ENCODE measurements at regions of chr7 and their contacts with region 1.

Region 1: DNA sequence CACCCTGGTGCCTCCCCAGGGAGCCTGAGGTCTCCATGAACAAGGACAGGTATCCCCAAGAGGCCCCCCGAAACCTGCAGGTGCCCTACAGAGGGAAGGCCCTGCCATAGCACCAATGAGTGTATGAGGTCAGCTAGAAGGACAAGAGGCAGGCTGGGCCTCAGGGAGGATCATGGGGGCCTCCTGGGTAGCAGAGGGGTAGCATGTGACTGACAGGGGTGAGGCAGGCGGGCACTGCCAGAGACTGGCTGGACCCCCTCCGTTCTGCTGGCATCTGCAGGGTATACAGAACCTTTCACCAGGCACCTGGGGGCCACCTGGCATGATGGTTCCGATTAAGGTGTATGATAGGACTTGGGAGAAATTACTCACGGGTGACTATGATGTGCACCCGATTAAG is 79.2 kb upstream of the KCTD7 start:
- DNase-seq: no peak
- ATAC-seq: no peak
- H3K4me3 Mint-ChIP-seq: no peak overlapping the region
- H3K27ac Mint-ChIP-seq: no peak overlapping the region
- H3K4me1 Mint-ChIP-seq: no peaks in the 10 kb centered on the region
- H3K27me3 Mint-ChIP-seq: no peaks in the 10 kb centered on the region

Region 2: DNA sequence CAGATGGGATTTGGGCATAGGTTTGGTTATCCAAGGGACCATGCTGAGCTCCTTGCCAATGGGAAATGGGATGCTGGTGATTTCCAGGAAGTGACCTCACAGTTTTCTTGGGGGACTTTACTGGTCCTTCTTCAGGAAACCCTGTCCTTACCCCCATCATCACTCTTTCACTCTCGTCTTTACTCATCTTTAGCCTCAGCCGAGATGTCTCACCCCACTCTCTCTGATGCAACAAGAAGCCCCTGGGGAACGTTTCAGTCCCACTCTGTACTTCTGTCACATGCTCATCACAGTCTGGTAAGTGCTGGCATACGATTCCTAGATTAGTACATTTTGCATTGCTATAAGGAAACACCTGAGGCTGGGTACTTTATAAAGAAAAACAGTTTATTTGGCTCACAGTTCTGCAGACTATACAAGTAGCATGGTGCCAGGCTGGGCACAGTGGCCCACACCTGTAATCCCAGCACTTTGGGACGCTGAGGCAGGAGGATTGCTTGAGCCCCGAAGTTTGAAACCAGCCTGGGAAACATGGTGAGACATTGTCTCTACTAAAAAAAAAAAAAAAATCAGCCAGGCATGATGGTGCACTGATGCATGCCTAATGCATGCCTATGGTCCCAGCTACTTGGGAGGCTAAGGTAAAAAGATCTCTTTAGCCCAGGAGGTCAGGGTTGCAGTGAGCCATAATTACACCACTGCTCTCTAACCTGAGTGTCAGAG is 740.0 kb before region 1 on chr7:
- CTCF ChIA-PET with region 1: no interaction called
- POLR2A ChIA-PET with region 1: interaction called, 10 read pairs
- intact Hi-C with region 1: no loop called
- DNase-seq: no peak
- ATAC-seq: no peak
- H3K4me3 Mint-ChIP-seq: no peak overlapping the region
- H3K27ac Mint-ChIP-seq: no peak overlapping the region
- H3K4me1 Mint-ChIP-seq: no peaks in the 10 kb centered on the region
- H3K27me3 Mint-ChIP-seq: no peaks in the 10 kb centered on the region

Region 3: DNA sequence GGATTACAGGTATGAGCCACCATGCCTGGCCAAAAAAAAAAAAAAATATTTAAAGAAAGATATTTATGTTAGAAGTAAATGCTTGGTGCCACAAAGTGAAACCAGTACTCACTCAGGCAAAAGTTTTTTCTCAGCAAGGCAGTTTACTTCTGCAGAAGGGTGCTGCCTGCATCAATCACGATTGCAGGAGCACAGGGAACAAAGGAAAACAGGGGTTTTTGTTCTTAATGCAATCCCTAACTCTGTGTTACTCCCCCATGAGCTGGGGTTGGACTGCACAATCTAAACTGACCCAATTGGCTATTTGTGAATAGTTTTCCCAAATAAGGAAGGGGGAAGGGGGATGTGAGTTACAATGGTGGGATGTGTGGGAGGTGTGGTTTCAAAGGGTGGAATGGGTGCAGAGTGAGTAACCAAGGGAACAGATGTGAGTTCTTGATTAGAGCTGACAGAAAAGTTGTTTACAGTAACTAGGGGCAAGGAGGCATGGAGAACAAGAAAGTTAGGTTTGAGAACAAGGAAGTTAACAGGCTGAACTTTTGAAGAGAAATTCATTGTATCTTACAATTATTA is 702.6 kb after region 1 on chr7:
- CTCF ChIA-PET with region 1: no interaction called
- POLR2A ChIA-PET with region 1: no interaction called
- intact Hi-C with region 1: no loop called
- DNase-seq: no peak
- ATAC-seq: no peak
- H3K4me3 Mint-ChIP-seq: no peak overlapping the region
- H3K27ac Mint-ChIP-seq: no peak overlapping the region
- H3K4me1 Mint-ChIP-seq: peaks cover 3% of the 10 kb centered on the region
- H3K27me3 Mint-ChIP-seq: no peaks in the 10 kb centered on the region

Measured in activated CD4-positive, alpha-beta T cell treated with anti-CD3 and anti-CD28 coated beads for 36 hours (primary cell).